ENCODE measurements at regions of chrX and their contacts with region 1.

Region 1: DNA sequence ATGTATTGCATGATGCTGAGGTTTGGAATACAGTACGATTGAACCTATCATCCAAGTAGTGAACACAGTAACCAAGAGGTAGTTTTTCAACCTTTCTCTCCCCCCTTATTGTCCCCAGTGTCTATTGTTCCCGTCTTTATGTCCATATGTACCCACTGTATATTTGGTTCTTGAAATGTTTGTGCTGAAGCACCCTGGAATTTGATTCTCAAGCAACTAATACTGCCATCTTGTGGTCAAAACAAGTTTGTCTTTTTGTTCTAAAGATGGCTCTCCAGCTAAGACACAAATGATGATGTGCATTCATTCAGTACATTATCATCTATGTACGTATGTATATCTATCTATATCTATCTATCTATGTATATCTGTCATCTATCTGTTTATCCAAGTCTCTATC is 33.5 kb upstream of the DCX start:
- DNase-seq: no peak
- H3K4me3 Mint-ChIP-seq: no peak overlapping the region
- H3K27ac Mint-ChIP-seq: no peak overlapping the region
- H3K4me1 Mint-ChIP-seq: no peaks in the 10 kb centered on the region
- H3K27me3 Mint-ChIP-seq: no peaks in the 10 kb centered on the region
- CTCF ChIP-seq: peak; percentile 19

Region 2: DNA sequence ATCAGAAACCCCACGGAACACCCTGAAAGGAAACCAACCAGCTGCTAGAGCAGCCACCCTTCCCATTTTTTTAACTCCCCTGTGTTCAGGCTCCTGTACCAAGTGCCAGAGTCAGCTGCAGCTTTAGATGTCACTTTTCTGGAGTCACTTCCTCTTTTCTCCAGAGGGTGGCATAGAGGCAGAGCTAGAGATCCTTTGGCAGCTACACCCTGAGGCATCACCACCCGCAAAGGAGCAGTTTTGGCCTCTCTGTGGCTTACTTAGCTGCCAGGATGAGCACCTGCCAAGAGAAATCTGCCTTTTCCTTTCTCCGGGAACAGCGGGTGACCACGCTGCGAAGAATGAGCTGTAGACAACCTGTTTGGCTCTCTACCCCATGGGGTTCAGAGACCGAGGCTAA is 591.9 kb before region 1 on chrX:
- CTCF ChIA-PET with region 1: no interaction called
- intact Hi-C with region 1: loop called (anchors 5 kb)
- DNase-seq: peak; percentile 24
- H3K4me3 Mint-ChIP-seq: no peak overlapping the region
- H3K27ac Mint-ChIP-seq: no peak overlapping the region
- H3K4me1 Mint-ChIP-seq: no peaks in the 10 kb centered on the region
- H3K27me3 Mint-ChIP-seq: peaks cover 14% of the 10 kb centered on the region
- CTCF ChIP-seq: peak; percentile 16

Region 3: DNA sequence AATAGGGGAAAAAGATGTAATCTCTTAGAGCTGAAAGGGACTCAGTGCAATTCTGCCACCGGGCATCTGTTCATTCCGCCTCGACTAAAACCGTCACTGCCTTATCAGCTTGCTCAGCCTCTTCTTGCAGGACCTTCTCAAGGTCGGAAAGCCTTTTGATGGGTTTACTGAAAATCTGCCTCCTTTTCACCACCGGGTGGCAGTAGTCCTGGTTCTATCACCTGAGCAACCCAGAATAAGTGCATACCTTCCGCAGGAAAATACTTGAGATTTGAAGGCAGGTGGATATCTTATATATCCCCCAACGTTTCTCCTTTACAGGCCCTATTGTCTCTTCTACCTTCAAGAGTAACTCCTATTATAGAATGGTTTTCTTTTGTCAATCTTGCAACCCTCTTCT is 452.9 kb before region 1 on chrX:
- CTCF ChIA-PET with region 1: no interaction called
- intact Hi-C with region 1: loop called (anchors 10 kb)
- DNase-seq: peak; percentile 28
- H3K4me3 Mint-ChIP-seq: no peak overlapping the region
- H3K27ac Mint-ChIP-seq: no peak overlapping the region
- H3K4me1 Mint-ChIP-seq: no peaks in the 10 kb centered on the region
- H3K27me3 Mint-ChIP-seq: peaks cover 37% of the 10 kb centered on the region
- CTCF ChIP-seq: peak; percentile 22

Region 4: DNA sequence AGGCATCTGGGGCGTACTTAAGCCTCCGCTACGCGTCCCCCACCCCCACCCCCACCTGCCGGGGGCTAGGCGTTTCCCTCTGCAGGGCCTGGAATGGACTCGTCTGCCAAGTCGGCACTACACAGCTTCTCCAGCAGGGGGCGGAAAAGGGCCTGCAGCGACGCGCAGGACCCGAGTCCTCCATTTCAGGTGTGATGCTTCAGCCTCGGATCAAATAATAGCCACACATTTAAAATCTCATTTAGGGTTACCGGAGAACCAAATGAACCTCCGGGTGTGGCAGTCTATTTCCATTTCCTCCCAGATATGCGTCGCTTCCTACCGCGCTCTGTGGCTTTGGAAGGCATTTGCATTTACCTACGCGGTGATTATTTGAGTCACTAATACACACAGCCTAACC is 346.6 kb before region 1 on chrX:
- CTCF ChIA-PET with region 1: no interaction called
- intact Hi-C with region 1: loop called (anchors 10 kb)
- DNase-seq: peak; percentile 60
- H3K4me3 Mint-ChIP-seq: no peak overlapping the region
- H3K27ac Mint-ChIP-seq: no peak overlapping the region
- H3K4me1 Mint-ChIP-seq: peaks cover 8% of the 10 kb centered on the region
- H3K27me3 Mint-ChIP-seq: peaks cover 48% of the 10 kb centered on the region
- CTCF ChIP-seq: peak; percentile 70

Region 5: GRCh38 chrX:111168314-111168713 is 277.2 kb before region 1 on chrX:
- CTCF ChIA-PET with region 1: no interaction called
- intact Hi-C with region 1: loop called (anchors 2 kb)
- DNase-seq: no peak
- H3K4me3 Mint-ChIP-seq: no peak overlapping the region
- H3K27ac Mint-ChIP-seq: no peak overlapping the region
- H3K4me1 Mint-ChIP-seq: no peaks in the 10 kb centered on the region
- H3K27me3 Mint-ChIP-seq: no peaks in the 10 kb centered on the region
- CTCF ChIP-seq: no peak

Region 6: GRCh38 chrX:111265486-111265885 is 180.0 kb before region 1 on chrX:
- CTCF ChIA-PET with region 1: no interaction called
- intact Hi-C with region 1: loop called (anchors 5 kb)
- DNase-seq: no peak
- H3K4me3 Mint-ChIP-seq: no peak overlapping the region
- H3K27ac Mint-ChIP-seq: no peak overlapping the region
- H3K4me1 Mint-ChIP-seq: no peaks in the 10 kb centered on the region
- H3K27me3 Mint-ChIP-seq: no peaks in the 10 kb centered on the region
- CTCF ChIP-seq: no peak